ENCODE measurements at regions of chr2 and their contacts with region 1.

Region 1: DNA sequence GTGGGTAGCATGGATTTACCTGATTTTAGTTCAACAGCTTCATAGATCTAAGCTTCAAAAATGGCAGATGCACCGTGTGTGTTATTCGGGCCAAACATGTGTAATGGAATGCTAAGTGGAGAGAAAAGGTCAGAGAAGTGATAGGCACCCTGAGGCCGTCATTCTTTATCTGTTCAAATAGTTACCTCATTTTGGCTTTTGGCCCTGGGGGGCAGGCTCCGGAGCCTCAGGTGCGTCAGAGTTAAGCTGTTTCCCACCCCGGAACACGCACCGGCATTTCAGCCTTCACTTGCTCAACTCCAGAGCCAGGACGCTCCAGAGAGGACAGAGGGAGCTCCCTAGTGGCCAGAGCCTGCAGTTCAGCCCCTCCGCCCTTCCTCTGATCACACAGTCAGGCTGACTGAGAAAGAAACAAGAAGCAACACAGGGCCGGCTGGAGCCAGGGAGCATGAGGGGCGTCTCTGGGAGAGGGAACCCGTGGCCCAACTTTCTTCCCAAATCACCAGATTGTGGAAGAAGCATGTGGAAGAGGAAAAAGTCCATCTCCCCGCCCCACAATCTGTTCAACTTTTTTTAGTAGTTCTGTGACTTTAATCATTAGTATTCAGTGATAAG is 135.2 kb upstream of the EPC2 start:
- DNase-seq: peak; percentile 87
- H3K4me3 ChIP-seq: peak overlapping the region in 2 of 3 experiments; percentile 27 to 62
- H3K27ac ChIP-seq: no peak overlapping the region
- H3K4me1 ChIP-seq: peaks cover 5% of the 10 kb centered on the region
- H3K27me3 ChIP-seq: no peaks in the 10 kb centered on the region
- CTCF ChIP-seq: peak; percentile 87 to 97
- POLR2A ChIP-seq: no peak

Region 2: GRCh38 chr2:146734042-146734820 is 1775.2 kb before region 1 on chr2:
- CTCF ChIA-PET with region 1: interaction called, 3 read pairs
- POLR2A ChIA-PET with region 1: no interaction called
- dilution Hi-C with region 1: no loop called
- intact Hi-C with region 1: loop called (anchors 1 kb)
- DNase-seq: peak; percentile 71
- H3K4me3 ChIP-seq: no peak overlapping the region
- H3K27ac ChIP-seq: no peak overlapping the region
- H3K4me1 ChIP-seq: no peaks in the 10 kb centered on the region
- H3K27me3 ChIP-seq: no peaks in the 10 kb centered on the region
- CTCF ChIP-seq: peak; percentile 31 to 43
- POLR2A ChIP-seq: no peak

Region 3: DNA sequence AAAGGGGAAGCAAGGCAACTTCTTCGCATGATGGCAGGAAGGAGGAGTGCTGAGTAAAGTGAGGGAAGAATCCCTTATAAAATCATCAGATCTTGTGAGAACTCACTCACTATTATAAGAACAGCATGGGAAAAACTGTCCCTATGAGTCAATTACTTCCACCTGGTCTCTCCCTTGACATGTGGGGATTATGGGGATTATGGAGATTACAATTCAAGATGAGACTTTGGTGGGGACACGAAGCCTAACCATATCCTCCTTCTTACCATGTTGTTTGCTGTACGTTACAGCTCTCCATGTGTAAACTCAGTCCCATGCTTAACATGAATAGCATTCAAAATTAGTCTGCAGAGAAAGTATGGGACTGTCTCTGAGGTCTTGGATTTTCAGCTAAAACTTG is 1761.3 kb before region 1 on chr2:
- CTCF ChIA-PET with region 1: no interaction called
- POLR2A ChIA-PET with region 1: no interaction called
- dilution Hi-C with region 1: no loop called
- intact Hi-C with region 1: no loop called
- DNase-seq: no peak
- H3K4me3 ChIP-seq: no peak overlapping the region
- H3K27ac ChIP-seq: no peak overlapping the region
- H3K4me1 ChIP-seq: no peaks in the 10 kb centered on the region
- H3K27me3 ChIP-seq: no peaks in the 10 kb centered on the region
- CTCF ChIP-seq: no peak
- POLR2A ChIP-seq: no peak

Region 4: GRCh38 chr2:147989809-147990403 is 519.5 kb before region 1 on chr2:
- CTCF ChIA-PET with region 1: interaction called, 174 read pairs
- POLR2A ChIA-PET with region 1: no interaction called
- dilution Hi-C with region 1: no loop called
- intact Hi-C with region 1: loop called (anchors 1 kb)
- DNase-seq: peak; percentile 66
- H3K4me3 ChIP-seq: no peak overlapping the region
- H3K27ac ChIP-seq: no peak overlapping the region
- H3K4me1 ChIP-seq: no peaks in the 10 kb centered on the region
- H3K27me3 ChIP-seq: no peaks in the 10 kb centered on the region
- CTCF ChIP-seq: peak; percentile 32 to 44
- POLR2A ChIP-seq: no peak

Region 5: GRCh38 chr2:148096012-148096411 is 413.4 kb before region 1 on chr2:
- CTCF ChIA-PET with region 1: interaction called, 3 read pairs
- POLR2A ChIA-PET with region 1: no interaction called
- dilution Hi-C with region 1: no loop called
- intact Hi-C with region 1: loop called (anchors 5 kb)
- DNase-seq: peak; percentile 33
- H3K4me3 ChIP-seq: no peak overlapping the region
- H3K27ac ChIP-seq: no peak overlapping the region
- H3K4me1 ChIP-seq: peaks cover 9% of the 10 kb centered on the region
- H3K27me3 ChIP-seq: no peaks in the 10 kb centered on the region
- CTCF ChIP-seq: no peak
- POLR2A ChIP-seq: no peak

Region 6: DNA sequence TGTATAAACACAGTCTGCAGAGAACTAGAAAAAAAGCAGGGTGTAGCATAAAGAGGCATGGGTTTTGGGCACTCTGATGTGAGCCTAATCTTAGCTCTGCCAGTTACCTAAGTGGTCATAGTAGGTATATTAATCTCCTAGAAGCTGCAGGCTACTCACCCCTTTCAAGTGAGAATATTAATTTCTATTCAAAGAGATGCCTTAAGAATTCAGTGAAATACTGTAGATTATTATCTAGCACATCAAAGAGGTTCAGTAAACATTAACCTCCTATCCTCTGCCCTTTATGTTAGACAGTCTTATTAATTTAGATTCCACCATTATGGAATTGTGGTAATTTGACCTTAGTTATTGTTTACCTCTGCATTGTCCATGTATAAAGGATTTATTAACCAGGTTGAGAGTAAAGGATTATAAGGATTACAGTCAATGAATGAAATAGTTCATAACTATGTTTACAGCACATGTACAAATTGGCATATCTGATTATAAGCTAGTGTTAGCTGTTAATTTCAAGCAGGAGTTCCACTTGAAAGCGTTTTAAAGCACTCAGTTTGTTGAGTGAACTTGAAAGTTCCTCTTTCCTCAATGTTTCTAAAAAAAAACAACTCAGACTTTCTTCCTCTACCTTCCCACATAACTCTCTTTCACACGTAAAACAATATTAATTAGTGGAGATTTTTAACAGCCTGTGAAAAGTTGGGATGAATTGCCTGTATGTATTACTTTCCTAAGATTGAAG is 15.4 kb before region 1 on chr2:
- CTCF ChIA-PET with region 1: interaction called, 17 read pairs
- POLR2A ChIA-PET with region 1: no interaction called
- dilution Hi-C with region 1: no loop called
- intact Hi-C with region 1: no loop called
- DNase-seq: no peak
- H3K4me3 ChIP-seq: no peak overlapping the region
- H3K27ac ChIP-seq: no peak overlapping the region
- H3K4me1 ChIP-seq: no peaks in the 10 kb centered on the region
- H3K27me3 ChIP-seq: no peaks in the 10 kb centered on the region
- CTCF ChIP-seq: no peak
- POLR2A ChIP-seq: no peak

Region 7: DNA sequence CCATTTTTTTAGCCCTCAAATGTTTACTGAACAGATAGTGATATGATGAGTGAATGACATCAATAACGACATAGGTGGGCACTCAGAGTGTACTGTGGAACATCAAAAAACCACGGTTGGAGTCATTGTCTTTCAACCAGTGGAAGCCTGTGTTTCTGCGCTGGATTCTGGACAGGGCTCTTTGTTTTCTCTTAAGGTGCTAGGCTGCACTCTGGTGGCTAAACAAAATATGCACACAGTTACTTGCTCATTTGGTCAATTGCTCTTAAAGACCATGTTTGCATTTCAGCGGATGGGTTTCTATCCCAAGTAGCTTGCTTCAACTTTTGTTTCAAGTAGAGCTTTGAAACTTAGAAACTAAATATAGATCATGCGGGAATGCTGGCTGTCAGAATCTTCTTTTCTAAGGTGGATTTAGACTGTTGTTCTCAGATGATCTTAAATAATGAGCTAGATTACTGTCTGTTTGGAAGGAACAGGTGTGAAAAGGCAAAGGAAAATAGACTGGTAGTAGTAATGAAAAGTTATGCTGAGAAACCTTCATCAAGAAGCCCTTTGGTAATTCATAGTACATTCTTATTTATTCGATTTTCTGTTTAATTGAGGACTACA is 480.6 kb after region 1 on chr2:
- CTCF ChIA-PET with region 1: interaction called, 21 read pairs
- POLR2A ChIA-PET with region 1: no interaction called
- dilution Hi-C with region 1: no loop called
- intact Hi-C with region 1: loop called (anchors 1 kb)
- DNase-seq: peak; percentile 75
- H3K4me3 ChIP-seq: no peak overlapping the region
- H3K27ac ChIP-seq: no peak overlapping the region
- H3K4me1 ChIP-seq: no peaks in the 10 kb centered on the region
- H3K27me3 ChIP-seq: no peaks in the 10 kb centered on the region
- CTCF ChIP-seq: peak; percentile 55 to 59
- POLR2A ChIP-seq: no peak

Measured in endothelial cell of umbilical vein (primary cell).